ENCODE measurements at regions of chr7 and their contacts with region 1.

Region 1: GRCh38 chr7:2844165-2844898 is at the start of gene GNA12:
- DNase-seq: peak; percentile 99
- H3K4me3 ChIP-seq: peak within 1 kb of the TSS; percentile 58 to 74 (median 62)
- H3K27ac ChIP-seq: peak within 1 kb of the TSS; percentile 68 to 83 (median 76)
- H3K4me1 ChIP-seq: peaks cover 0 to 44% (median 32%) of the 10 kb centered on the region in 4 donors
- H3K27me3 ChIP-seq: no peaks in the 10 kb centered on the region
- CTCF ChIP-seq: no peak
- EP300 ChIP-seq: no peak
- POLR2A ChIP-seq: no peak
- total RNA-seq, gene GNA12: 21.4 to 46.5 (median 24.6) TPM

Region 2: GRCh38 chr7:2670720-2671391 is 173.5 kb before region 1 on chr7:
- intact Hi-C with region 1: loop called (anchors 5 kb)
- DNase-seq: peak; percentile 78
- H3K4me3 ChIP-seq: no peak overlapping the region
- H3K27ac ChIP-seq: no peak overlapping the region
- H3K4me1 ChIP-seq: peaks cover 0 to 7% (median 3%) of the 10 kb centered on the region in 4 donors
- H3K27me3 ChIP-seq: peaks cover 0 to 6% (median 0%) of the 10 kb centered on the region in 3 donors
- CTCF ChIP-seq: peak; percentile 74 to 86 (median 86)
- EP300 ChIP-seq: no peak
- POLR2A ChIP-seq: no peak

Region 3: DNA sequence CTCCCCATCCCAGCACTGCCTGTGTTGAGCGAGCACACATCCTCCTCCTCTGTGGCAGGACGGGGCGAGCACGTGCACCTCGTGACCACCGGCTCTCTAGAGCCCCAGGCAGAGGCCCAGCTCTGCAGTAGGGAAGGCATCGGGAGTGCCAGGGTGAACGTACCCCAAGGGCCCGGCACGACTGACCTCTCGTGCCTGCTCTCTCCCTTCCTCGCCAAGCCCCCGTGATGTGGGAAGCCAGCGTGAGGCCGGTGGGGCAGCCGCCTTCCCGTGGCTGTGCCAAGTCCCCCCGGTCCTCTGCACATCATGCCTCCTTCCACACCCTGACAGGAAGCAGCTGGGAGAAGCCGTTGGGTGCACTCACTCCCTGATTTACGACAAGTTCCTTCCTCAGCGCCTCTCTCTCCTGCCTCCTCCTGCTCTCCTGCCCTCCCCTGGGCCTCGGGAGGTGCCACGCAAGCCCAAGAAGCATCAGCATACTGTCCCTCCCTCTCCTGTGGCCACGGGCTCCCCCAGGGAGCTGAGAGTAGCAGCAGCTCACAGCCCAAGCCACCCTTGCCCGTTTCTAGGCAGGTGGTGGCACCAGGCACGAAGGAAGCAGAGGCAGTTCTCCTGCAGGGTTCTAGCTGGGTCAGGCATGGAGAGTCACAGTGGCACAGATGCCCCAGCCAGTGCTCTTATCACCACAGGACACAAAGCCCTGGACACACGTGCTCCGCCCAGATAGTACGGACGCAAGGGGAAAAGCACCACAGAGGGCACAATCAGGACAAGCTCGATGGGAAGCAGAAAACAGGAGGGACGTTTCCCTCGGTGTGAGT is 109.4 kb before region 1 on chr7:
- intact Hi-C with region 1: loop called (anchors 2 kb)
- DNase-seq: peak; percentile 89
- H3K4me3 ChIP-seq: peak overlapping the region in 2 of 4 donors; percentile 8 to 13
- H3K27ac ChIP-seq: peak overlapping the region in 3 of 4 donors; percentile 71 to 92 (median 90)
- H3K4me1 ChIP-seq: peaks cover 0 to 76% (median 56%) of the 10 kb centered on the region in 4 donors
- H3K27me3 ChIP-seq: no peaks in the 10 kb centered on the region
- CTCF ChIP-seq: no peak
- EP300 ChIP-seq: peak in 1 of 4 donors; percentile 55
- POLR2A ChIP-seq: no peak

Region 4: GRCh38 chr7:2757904-2758672 is 86.2 kb before region 1 on chr7:
- intact Hi-C with region 1: loop called (anchors 2 kb)
- DNase-seq: peak; percentile 90
- H3K4me3 ChIP-seq: peak overlapping the region in 2 of 4 donors; percentile 12 to 22
- H3K27ac ChIP-seq: peak overlapping the region; percentile 85 to 96 (median 94)
- H3K4me1 ChIP-seq: peaks cover 0 to 79% (median 70%) of the 10 kb centered on the region in 4 donors
- H3K27me3 ChIP-seq: no peaks in the 10 kb centered on the region
- CTCF ChIP-seq: no peak
- EP300 ChIP-seq: peak; percentile 55 to 91 (median 79)
- POLR2A ChIP-seq: no peak

Region 5: GRCh38 chr7:2779086-2779485 is 65.2 kb before region 1 on chr7:
- intact Hi-C with region 1: loop called (anchors 5 kb)
- DNase-seq: no peak
- H3K4me3 ChIP-seq: no peak overlapping the region
- H3K27ac ChIP-seq: peak overlapping the region in 1 of 4 donors; percentile 41
- H3K4me1 ChIP-seq: peaks cover 0 to 19% (median 14%) of the 10 kb centered on the region in 4 donors
- H3K27me3 ChIP-seq: no peaks in the 10 kb centered on the region
- CTCF ChIP-seq: no peak
- EP300 ChIP-seq: no peak
- POLR2A ChIP-seq: no peak

Region 6: GRCh38 chr7:3370068-3370830 is 525.9 kb after region 1 on chr7:
- intact Hi-C with region 1: no loop called
- DNase-seq: no peak
- H3K4me3 ChIP-seq: no peak overlapping the region
- H3K27ac ChIP-seq: peak overlapping the region in 3 of 4 donors; percentile 17 to 47 (median 44)
- H3K4me1 ChIP-seq: peaks cover 0 to 55% (median 23%) of the 10 kb centered on the region in 4 donors
- H3K27me3 ChIP-seq: no peaks in the 10 kb centered on the region
- CTCF ChIP-seq: peak in 3 of 4 experiments; percentile 8 to 39 (median 21)
- EP300 ChIP-seq: peak in 1 of 4 donors; percentile 41
- POLR2A ChIP-seq: no peak

Measured in sigmoid colon (tissue), 7 donors.